OCI-LY7 (cell line): ENCODE measurements at regions of chr16 and their contacts with region 1.

Region 1: DNA sequence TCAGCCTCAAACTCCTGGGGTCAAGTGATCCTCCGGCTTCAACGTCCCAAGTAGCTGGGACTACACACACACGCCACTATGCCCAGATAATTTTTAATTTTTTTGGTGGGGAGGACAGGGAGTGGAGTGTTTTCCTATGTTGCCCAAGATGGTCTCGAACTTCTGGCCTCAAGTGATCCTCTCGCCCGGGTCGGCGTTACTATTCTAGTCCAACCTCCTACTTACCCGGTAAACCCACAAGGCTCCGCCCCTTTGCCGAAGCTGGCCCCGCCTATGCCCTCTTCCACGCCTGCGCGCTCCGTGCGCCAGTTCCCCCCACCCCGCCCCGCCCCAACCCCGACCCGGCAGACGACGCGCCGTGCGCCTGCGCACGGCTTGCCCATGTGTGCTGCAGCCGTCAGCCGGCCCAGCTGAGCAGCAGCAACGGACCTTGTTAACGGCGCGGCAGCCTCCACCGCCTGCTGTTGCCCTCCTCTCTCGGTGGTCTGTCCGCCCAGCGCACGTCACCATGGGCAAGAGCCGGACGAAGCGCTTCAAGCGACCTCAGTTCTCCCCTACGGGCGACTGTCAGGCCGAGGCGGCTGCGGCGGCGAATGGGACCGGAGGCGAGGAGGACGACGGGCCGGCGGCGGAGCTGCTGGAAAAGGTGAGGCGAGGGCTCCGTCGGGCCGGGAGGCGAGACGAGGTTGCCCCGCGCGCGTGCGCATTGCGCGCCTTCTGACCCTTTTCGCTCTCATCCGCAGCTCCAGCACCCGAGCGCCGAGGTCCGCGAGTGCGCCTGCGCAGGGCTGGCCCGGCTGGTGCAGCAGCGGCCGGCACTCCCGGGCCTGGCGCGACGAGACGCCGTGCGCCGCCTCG is at the start of gene HEATR3:
- DNase-seq: peak; percentile 93
- H3K4me3 ChIP-seq: peak within 1 kb of the TSS; percentile 80
- H3K27ac ChIP-seq: peak within 1 kb of the TSS; percentile 89
- H3K4me1 ChIP-seq: peaks cover 26% of the 10 kb centered on the region
- CTCF ChIP-seq: no peak
- total RNA-seq, gene HEATR3: 36.8 and 50.6 TPM in 2 replicates

Region 2: GRCh38 chr16:50024684-50025536 is 40.9 kb before region 1 on chr16 and contains the start of gene CNEP1R1:
- CTCF ChIA-PET with region 1: interaction called, 4 read pairs
- POLR2A ChIA-PET with region 1: interaction called, 11 read pairs
- intact Hi-C with region 1: loop called (anchors 2 kb)
- DNase-seq: peak; percentile 96
- H3K4me3 ChIP-seq: peak within 1 kb of the TSS; percentile 98
- H3K27ac ChIP-seq: peak within 1 kb of the TSS; percentile 38
- H3K4me1 ChIP-seq: peaks cover 14% of the 10 kb centered on the region
- CTCF ChIP-seq: peak; percentile 99
- total RNA-seq, gene CNEP1R1: 19.9 and 23.1 TPM in 2 replicates

Region 3: GRCh38 chr16:50152807-50153452 is 87.1 kb after region 1 on chr16 and contains the start of gene TENT4B:
- CTCF ChIA-PET with region 1: no interaction called
- POLR2A ChIA-PET with region 1: interaction called, 6 read pairs
- intact Hi-C with region 1: loop called (anchors 2 kb)
- DNase-seq: peak; percentile 83
- H3K4me3 ChIP-seq: peak within 1 kb of the TSS; percentile 95
- H3K27ac ChIP-seq: peak within 1 kb of the TSS; percentile 73
- H3K4me1 ChIP-seq: peaks cover 27% of the 10 kb centered on the region
- CTCF ChIP-seq: no peak
- total RNA-seq, gene TENT4B: 5.6 and 5.8 TPM in 2 replicates

Region 4: DNA sequence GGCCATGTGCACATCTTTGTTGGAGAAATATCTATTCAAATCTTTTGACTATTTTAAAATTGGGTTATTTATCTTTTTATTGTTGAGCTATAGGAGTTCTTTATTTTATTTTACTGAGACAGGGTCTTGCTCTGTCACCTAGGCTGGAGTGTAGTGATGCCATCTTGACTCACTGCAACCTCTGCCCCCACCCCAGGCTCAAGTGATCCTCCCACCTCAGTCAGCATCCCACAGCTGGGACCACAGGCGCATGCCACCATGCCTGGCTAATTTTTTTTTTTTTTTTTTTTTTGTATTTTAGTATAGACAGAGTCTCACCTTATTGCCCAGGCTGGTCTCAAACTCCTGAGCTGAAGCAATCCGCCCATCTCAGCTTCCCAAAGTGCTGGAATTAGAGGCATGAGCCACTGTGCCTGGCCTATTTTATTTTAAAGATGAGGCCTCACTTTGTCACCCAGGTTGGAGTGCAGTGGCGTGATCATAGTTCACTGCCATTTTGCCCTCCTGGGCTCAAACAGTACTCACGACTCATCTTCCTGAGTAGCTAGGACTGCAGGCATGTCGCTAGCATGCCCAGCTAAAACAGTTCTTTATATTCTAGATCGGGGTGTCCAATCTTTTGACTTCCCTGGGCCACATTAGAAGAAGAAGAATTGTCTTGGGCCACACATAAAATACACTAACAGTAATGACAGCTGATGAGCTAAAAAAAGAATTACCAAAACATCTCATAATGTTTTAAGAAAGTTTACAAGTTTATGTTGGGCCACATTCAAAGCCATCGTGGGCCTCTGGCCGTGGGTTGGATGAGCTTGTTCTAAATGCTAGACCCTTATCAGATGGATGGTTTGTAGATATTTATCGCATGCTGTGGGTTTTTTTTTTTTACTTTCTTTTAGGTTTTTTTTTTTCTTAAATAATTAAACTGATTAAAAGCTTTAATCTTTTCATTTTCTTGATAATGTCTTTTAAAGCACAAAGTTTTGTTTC is 101.0 kb after region 1 on chr16:
- CTCF ChIA-PET with region 1: no interaction called
- POLR2A ChIA-PET with region 1: no interaction called
- intact Hi-C with region 1: no loop called
- DNase-seq: no peak
- H3K4me3 ChIP-seq: no peak overlapping the region
- H3K27ac ChIP-seq: no peak overlapping the region
- H3K4me1 ChIP-seq: no peaks in the 10 kb centered on the region
- CTCF ChIP-seq: no peak

Region 5: DNA sequence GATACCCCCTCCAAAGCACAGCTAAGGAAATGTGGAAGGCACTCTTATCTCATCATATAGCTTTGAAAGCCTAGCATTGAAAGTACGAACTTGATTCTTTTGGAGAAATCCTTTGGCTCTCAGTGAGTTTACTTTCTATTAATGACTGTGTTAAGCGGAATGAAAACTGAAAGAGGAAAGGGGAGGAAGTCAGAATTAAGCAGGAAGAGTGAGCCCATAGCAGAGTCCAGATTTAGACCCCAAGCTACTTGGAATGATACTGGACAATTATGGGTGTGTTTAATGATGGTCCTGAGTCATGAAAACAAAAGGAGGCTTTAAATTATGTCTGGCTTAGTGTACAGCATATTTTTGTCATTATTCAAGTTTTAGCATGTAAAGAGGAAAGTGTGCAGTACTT is 129.4 kb after region 1 on chr16:
- CTCF ChIA-PET with region 1: interaction called, 3 read pairs
- POLR2A ChIA-PET with region 1: interaction called, 4 read pairs
- intact Hi-C with region 1: loop called (anchors 5 kb)
- DNase-seq: no peak
- H3K4me3 ChIP-seq: no peak overlapping the region
- H3K27ac ChIP-seq: no peak overlapping the region
- H3K4me1 ChIP-seq: peaks cover 50% of the 10 kb centered on the region
- CTCF ChIP-seq: no peak